ENCODE measurements at regions of chr15 and their contacts with region 1.

Region 1: DNA sequence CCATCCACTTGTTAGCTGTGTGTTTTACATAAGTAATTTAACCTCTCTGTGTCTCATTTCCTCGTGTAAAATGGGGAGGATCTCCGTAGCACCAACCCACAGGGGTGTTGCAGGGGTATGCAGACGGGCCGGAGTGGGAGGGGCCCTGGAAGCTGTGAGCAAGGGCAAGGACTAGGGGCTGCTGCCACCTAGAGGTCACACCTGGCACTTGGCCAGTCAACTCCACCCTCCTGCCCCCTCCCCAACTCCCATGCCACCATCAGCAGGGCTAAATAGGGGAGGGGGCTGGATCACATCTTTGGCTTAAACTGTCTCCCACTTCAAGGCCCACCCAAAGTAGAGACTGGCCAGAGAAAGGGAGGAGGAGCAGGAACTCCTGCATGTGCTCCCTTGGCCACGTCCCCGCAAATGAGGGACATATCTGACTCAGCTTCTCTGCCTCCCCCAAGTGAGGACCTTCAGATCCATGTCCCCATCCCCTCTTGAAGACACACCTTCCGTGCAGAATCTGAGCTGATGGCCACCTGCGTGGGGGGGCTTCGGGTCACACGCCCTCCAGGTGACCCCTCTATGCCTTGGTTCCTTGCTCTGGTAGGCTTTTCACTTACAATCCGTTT is 2.6 kb downstream of the CCDC9B start:
- DNase-seq: peak; percentile 80

Region 2: DNA sequence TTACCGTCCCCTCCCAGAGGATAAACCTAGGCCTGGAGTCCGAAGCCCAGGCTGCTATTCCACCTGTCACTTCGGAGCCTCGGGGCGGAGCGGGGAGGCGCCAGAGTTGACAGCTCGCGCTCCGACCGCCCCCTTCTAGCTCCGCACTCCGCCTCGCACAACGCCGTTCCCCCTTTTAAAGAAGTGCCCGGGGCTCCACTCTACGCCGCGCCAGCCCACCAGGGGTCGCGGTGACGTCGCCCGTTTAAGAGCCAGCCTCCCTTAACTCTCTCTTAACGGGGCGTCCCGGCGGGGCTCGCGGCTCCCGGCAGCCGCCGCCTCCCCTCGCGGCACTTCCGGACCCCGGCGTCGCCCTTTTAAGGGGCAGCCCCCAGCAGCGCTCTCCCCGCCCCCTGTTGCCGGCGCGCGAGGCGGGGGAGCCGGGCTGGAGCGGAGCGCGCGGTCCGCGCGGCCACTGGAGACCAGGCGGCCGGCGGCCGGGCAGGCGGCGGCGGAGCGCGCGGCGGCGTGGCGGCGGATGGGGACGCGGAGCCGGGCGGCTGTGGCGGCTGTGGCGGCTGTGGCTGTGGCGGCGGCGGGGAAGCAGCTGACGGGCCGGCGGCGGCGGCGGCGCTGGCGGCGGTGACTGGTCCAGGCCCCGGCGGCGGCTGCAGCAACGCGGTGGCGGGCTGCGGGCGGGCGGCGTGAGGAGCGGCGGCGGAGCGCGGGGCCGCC is 14.8 kb before region 1 on chr15 and contains the start of gene INAFM2:
- CTCF ChIA-PET with region 1: interaction called, 37 read pairs
- POLR2A ChIA-PET with region 1: interaction called, 29 read pairs
- DNase-seq: peak; percentile 78

Region 3: DNA sequence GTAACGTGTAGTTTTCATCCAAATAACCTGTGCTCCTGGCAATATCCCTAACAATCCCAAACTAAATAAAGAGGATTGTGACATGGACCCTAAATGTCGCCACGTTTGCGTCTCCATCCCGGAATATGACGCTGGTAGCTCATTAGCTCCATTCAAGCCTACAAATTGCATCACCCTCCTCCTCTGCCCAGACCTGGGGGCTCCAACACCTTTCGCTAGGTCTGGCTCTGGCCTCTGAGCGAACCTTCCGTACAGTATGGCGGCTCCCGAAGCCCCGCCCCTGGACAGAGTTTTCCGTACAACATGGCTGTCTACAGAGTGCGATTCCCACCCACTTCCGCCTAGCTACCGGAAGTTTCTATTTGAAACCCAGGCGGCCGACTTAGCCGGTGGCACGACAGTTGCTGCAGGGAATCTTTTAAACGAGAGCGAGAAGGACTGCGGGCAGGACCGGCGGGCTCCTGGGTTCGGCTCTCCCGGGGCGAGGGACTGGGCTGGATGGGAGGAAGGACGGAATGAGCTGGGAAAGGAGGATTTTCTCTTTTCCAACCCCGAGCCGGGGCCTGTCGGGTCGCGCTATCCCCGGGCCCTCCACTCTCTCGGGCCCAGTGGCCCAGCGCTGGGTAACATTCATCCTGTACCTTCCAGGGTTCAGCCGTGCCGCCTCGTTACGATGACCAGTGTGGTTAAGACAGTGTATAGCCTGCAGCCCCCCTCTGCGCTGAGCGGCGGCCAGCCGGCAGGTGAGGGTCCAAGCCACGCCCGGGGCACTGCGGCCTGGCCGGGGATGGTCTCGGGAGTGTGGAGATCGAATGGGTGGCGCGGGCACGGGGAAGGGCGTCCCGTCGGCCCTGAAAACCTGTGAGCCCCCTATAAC is 44.7 kb after region 1 on chr15 and contains the start of gene KNSTRN:
- CTCF ChIA-PET with region 1: no interaction called
- POLR2A ChIA-PET with region 1: no interaction called
- DNase-seq: peak; percentile 91

Measured in HEK293T (cell line).